WTC11 (cell line): ENCODE measurements at regions of chr20 and their contacts with region 1.

Region 1: GRCh38 chr20:22691369-22692118 is 107.2 kb upstream of the FOXA2 start:
- DNase-seq: peak; percentile 80
- ATAC-seq: peak; percentile 96
- H3K4me3 Mint-ChIP-seq: no peak overlapping the region
- H3K27ac Mint-ChIP-seq: no peak overlapping the region
- H3K4me1 Mint-ChIP-seq: peaks cover 3% of the 10 kb centered on the region
- H3K27me3 Mint-ChIP-seq: peaks cover 20% of the 10 kb centered on the region
- CTCF ChIP-seq: peak; percentile 77

Region 2: DNA sequence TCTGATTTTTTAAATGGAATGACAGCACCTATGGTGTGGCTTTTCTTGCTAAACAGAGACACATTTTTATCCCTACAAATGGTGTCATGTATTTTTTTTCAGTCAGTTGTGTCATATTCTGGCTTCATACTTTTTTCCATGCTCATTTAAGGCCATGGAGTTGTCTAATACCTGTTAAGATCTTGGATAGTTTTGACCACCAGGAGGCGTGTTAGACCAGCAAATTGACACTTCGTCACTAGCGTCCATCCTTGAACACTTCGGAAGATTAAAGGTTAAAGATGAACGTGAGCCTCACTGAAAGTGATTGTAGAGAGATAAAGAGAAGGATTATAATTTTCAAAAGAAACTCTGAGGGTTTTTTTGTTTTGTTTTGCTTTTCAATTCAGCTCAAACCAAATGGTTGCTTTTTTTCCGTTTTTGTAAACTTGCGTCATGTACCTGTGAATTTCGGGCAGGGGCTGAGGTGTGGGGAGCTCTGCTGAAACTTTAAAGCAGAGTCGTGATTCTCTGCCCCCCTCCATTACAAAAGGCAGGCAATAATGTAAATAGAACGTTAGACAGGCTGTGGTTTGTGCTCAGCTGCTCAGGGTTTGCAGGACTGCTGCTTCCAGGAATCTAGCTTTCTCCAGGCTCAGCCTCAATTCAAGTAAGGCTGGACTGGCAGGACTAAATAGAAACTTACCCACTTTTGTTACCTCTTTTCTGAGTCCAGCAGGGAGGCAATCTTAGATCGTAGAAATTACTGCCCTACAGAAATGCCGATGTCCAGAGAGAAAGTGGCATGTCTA is 352.3 kb before region 1 on chr20:
- CTCF ChIA-PET with region 1: interaction called, 17 read pairs
- POLR2A ChIA-PET with region 1: no interaction called
- DNase-seq: peak; percentile 45
- ATAC-seq: peak; percentile 66
- H3K4me3 Mint-ChIP-seq: peak overlapping the region; percentile 38; the same call in 1 of the 2 replicates
- H3K27ac Mint-ChIP-seq: no peak overlapping the region
- H3K4me1 Mint-ChIP-seq: peaks cover 12% of the 10 kb centered on the region
- H3K27me3 Mint-ChIP-seq: peaks cover 14% of the 10 kb centered on the region
- CTCF ChIP-seq: peak; percentile 77

Region 3: DNA sequence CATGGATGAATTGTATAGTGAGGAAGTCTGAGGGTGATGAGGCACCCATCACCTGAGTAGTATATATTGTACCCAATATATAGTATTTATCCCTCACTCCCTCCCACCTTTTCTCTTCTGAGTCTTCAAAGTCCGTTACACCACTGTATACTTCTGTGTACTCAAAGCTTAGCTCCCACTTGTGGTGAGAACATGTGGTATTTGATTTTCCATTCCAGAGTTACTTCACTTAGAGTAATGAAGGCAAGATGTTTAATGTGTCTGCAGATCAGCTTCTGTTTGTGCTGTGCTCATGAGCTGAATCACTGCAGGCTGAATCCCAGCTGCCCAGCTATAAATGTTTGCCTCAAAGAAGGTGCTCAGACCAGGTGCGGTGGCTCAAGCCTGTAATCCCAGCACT is 32.1 kb after region 1 on chr20:
- CTCF ChIA-PET with region 1: interaction called, 17 read pairs
- POLR2A ChIA-PET with region 1: no interaction called
- DNase-seq: no peak
- ATAC-seq: no peak
- H3K4me3 Mint-ChIP-seq: no peak overlapping the region
- H3K27ac Mint-ChIP-seq: no peak overlapping the region
- H3K4me1 Mint-ChIP-seq: peaks cover 6% of the 10 kb centered on the region
- H3K27me3 Mint-ChIP-seq: peaks cover 5% of the 10 kb centered on the region
- CTCF ChIP-seq: no peak

Region 4: DNA sequence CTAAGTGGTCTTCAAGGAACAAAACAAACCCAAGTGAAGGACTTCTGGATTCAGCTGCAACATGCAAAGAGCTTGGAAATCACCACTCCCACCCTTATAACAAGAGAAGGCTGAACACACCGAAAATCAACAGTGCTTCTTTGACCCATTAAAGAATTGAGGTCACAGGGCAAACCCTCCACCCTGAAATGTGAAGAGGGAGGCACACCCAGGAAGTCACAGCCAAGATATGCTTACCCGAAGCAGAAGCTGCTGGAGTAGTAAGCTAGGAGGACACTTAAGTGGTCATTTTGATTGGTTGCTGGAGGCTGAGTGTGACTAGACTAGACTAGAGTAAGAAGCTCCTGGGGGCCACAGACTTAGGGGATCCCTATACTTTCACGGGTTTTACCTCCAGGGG is 155.3 kb after region 1 on chr20:
- CTCF ChIA-PET with region 1: interaction called, 28 read pairs
- POLR2A ChIA-PET with region 1: no interaction called
- DNase-seq: no peak
- ATAC-seq: no peak
- H3K4me3 Mint-ChIP-seq: no peak overlapping the region
- H3K27ac Mint-ChIP-seq: no peak overlapping the region
- H3K4me1 Mint-ChIP-seq: 0 out of 2 replicates have a peak, but pooled peaks cover 3% of the 10 kb centered on the region
- H3K27me3 Mint-ChIP-seq: no peaks in the 10 kb centered on the region
- CTCF ChIP-seq: no peak

Region 5: GRCh38 chr20:22962557-22963438 is 271.3 kb after region 1 on chr20:
- CTCF ChIA-PET with region 1: interaction called, 12 read pairs
- POLR2A ChIA-PET with region 1: no interaction called
- DNase-seq: no peak
- ATAC-seq: no peak
- H3K4me3 Mint-ChIP-seq: no peak overlapping the region
- H3K27ac Mint-ChIP-seq: no peak overlapping the region
- H3K4me1 Mint-ChIP-seq: peaks cover 12% of the 10 kb centered on the region
- H3K27me3 Mint-ChIP-seq: no peaks in the 10 kb centered on the region
- CTCF ChIP-seq: no peak

Region 6: DNA sequence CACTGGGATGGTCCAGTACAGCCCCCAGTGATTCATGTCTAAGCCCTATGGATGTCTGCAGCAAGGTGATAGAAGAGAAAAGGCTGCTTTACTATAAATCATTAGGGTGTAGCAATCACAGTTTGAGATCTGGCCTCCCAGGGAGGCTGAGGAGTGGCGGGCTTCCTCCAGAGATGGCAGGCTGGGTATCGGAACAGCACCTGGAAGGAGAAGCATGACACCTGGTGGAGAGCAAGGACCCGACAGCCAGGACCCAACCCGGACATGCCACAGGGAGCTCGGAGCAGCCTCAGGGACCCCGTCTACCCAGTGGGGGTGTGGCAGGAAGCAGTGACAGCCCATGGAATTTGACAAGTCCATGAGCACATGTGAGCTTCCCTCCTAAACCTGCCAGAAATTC is 509.4 kb after region 1 on chr20:
- CTCF ChIA-PET with region 1: interaction called, 27 read pairs
- POLR2A ChIA-PET with region 1: no interaction called
- DNase-seq: peak; percentile 77
- ATAC-seq: peak; percentile 92
- H3K4me3 Mint-ChIP-seq: no peak overlapping the region
- H3K27ac Mint-ChIP-seq: no peak overlapping the region
- H3K4me1 Mint-ChIP-seq: peaks cover 20% of the 10 kb centered on the region
- H3K27me3 Mint-ChIP-seq: peaks cover 13% of the 10 kb centered on the region
- CTCF ChIP-seq: peak; percentile 35; the same call in 1 of the 2 replicates